Activated naive CD4-positive, alpha-beta T cell treated with anti-CD3 and anti-CD28 coated beads, Interleukin-2, amount 10 ng/mL, durations not matched to agents 7 days and 5 days (primary cell): ENCODE measurements at regions of chr12 and their contacts with region 1.

Region 1: GRCh38 chr12:4276524-4277204 is 3.1 kb downstream of the CCND2 start:
- DNase-seq: peak; percentile 92
- H3K4me3 Mint-ChIP-seq: peak overlapping the region; percentile 89
- H3K27ac Mint-ChIP-seq: peak overlapping the region; percentile 99
- H3K4me1 Mint-ChIP-seq: peaks cover 57% of the 10 kb centered on the region
- H3K27me3 Mint-ChIP-seq: no peaks in the 10 kb centered on the region

Region 2: GRCh38 chr12:3973978-3974644 is 302.6 kb before region 1 on chr12:
- CTCF ChIA-PET with region 1: interaction called, 10 read pairs
- DNase-seq: no peak
- H3K4me3 Mint-ChIP-seq: no peak overlapping the region
- H3K27ac Mint-ChIP-seq: peak overlapping the region; percentile 62
- H3K4me1 Mint-ChIP-seq: peaks cover 52% of the 10 kb centered on the region
- H3K27me3 Mint-ChIP-seq: peaks cover 7% of the 10 kb centered on the region

Region 3: DNA sequence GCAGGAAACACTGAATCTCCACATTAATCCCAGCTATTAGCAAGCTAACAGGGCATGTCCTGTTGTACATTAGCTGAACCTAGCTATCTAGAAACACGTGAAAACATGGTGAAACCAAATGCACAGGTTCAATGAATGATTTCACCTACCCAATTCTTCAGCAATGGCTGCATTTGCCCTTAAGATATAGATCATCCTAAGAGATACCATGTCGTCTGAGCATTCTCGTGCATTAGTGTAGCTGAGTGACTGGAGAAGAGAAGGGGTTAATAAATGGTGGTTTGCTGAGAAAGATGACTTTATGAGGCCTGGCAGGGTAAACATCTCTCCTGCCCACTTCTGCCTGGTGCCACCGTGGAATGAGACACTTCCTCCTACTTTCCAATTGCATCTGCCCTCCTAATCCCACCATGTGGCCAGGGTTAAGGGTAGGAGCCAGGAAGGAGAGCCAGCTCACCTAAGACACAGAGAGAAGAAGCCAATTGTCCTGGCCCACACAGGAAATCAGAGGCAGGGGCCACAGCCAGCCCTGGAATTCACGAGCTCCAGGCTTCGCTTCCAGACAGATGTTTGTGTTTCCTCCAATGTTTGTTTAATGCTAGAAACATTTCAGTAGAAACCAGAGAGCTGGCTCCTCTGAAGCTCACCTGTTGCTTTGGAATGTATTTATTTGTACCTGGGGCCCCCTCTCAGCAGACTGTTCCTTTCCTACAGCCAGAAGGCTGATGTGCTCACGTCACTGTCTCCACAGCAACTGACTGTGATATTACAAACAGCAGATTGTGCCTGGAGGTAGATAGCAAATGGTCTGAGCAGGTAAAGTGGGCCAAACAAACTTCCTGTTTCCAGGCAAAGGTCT is 277.5 kb before region 1 on chr12:
- CTCF ChIA-PET with region 1: interaction called, 62 read pairs
- DNase-seq: no peak
- H3K4me3 Mint-ChIP-seq: no peak overlapping the region
- H3K27ac Mint-ChIP-seq: no peak overlapping the region
- H3K4me1 Mint-ChIP-seq: peaks cover 20% of the 10 kb centered on the region
- H3K27me3 Mint-ChIP-seq: peaks cover 16% of the 10 kb centered on the region

Region 4: DNA sequence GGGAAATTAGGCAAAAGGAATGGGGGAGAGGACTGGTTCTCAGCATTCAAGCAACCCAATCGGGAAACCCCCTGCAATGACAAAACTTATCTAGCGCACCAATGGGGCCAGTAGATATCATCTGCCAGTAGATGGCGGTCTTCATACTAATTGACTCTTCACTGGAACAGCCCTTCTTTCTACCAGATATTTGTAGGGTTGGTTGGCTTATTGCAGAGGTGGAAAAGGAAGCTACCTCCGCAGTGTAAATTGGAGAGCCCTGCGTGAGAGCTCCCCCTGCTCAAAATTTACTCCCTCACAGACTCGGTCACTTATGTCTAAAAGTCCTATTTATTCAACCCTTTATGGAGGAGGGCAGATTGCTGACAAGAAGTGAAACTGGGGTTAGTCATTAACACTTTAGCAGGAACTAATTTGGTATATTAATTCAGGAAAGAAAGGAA is 169.2 kb before region 1 on chr12:
- CTCF ChIA-PET with region 1: interaction called, 127 read pairs
- DNase-seq: peak; percentile 83
- H3K4me3 Mint-ChIP-seq: no peak overlapping the region
- H3K27ac Mint-ChIP-seq: peak overlapping the region; percentile 78
- H3K4me1 Mint-ChIP-seq: peaks cover 53% of the 10 kb centered on the region
- H3K27me3 Mint-ChIP-seq: peaks cover 4% of the 10 kb centered on the region

Region 5: GRCh38 chr12:4148418-4149056 is 128.1 kb before region 1 on chr12:
- CTCF ChIA-PET with region 1: interaction called, 55 read pairs
- DNase-seq: no peak
- H3K4me3 Mint-ChIP-seq: no peak overlapping the region
- H3K27ac Mint-ChIP-seq: peak overlapping the region; percentile 60
- H3K4me1 Mint-ChIP-seq: peaks cover 94% of the 10 kb centered on the region
- H3K27me3 Mint-ChIP-seq: no peaks in the 10 kb centered on the region

Region 6: DNA sequence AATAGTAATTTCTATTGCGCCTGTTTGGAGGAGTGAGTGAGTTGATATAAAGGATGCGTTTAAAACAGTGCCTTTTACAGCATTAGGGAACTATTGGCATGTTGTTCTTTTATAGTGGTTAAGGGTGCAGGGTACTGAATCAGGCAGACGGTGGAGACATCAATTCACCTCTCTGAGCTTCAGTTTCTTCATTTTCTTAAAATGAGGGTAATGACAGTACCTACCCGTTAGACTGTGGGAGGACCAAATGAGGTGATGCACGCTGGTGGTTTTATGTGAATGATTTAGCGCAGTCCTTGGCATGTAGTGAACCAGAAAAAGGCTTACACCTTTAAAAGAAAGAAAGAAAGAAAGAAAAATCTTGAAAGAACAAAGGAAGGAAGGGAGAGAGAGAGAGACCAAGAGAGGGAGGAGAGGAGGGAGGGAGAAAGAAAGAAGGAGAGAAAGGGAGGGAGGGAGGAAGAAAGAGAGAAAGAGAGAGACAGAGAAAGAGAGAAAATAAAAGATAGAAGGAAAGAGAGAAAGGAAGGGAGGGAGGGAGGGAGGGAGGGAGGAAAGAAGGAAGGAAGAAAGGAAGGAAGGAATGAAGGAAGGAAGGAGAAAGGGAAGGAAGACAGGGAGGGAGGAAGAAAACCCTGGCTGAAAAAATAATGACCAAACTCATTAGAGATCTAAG is 25.3 kb before region 1 on chr12:
- CTCF ChIA-PET with region 1: interaction called, 11 read pairs
- DNase-seq: no peak
- H3K4me3 Mint-ChIP-seq: no peak overlapping the region
- H3K27ac Mint-ChIP-seq: no peak overlapping the region
- H3K4me1 Mint-ChIP-seq: peaks cover 8% of the 10 kb centered on the region
- H3K27me3 Mint-ChIP-seq: peaks cover 29% of the 10 kb centered on the region

Region 7: GRCh38 chr12:4293299-4293965 is 16.8 kb after region 1 on chr12:
- CTCF ChIA-PET with region 1: interaction called, 22 read pairs
- DNase-seq: peak; percentile 39
- H3K4me3 Mint-ChIP-seq: peak overlapping the region; percentile 35
- H3K27ac Mint-ChIP-seq: peak overlapping the region; percentile 82
- H3K4me1 Mint-ChIP-seq: peaks cover 69% of the 10 kb centered on the region
- H3K27me3 Mint-ChIP-seq: no peaks in the 10 kb centered on the region

Region 8: GRCh38 chr12:4392223-4392742 is 115.6 kb after region 1 on chr12:
- CTCF ChIA-PET with region 1: no interaction called
- DNase-seq: no peak
- H3K4me3 Mint-ChIP-seq: no peak overlapping the region
- H3K27ac Mint-ChIP-seq: no peak overlapping the region
- H3K4me1 Mint-ChIP-seq: peaks cover 8% of the 10 kb centered on the region
- H3K27me3 Mint-ChIP-seq: peaks cover 76% of the 10 kb centered on the region